Activated B cell treated with CpG ODN at 0.5 μM for 24 hours (primary cell): ENCODE measurements at regions of chr2 and their contacts with region 1.

Region 1: DNA sequence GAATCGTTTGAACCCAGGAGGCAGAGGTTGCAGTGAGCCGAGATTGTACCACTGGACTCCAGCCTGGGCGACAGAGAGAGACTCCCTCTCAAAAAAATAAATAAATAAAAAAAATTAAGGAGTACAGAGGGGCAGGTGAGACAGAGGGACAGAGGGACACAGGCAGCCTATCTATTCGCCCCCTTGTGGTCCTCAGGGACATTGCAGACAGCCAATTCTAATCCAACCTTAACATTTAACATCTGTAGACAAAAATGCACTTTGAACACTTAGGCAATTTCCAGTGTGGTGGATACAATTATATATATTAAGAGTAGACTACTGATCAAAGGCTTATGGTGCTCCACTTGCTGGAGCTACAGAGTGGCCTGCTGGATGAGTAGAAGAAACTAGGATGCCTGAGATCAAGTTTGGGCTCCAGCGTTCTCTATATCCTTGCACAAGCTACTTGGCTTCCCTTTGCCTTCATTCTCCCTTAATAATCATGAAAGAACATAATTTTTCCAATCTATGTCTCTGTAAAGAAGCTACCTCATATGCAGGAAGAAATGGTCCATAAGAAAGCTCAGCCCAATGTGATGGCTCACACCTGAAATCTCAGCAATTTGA is 8.2 kb upstream of the SMARCAL1 start:
- DNase-seq: no peak
- ATAC-seq: peak; percentile 88
- H3K4me3 Mint-ChIP-seq: no peak overlapping the region
- H3K27ac Mint-ChIP-seq: no peak overlapping the region
- H3K4me1 Mint-ChIP-seq: no peaks in the 10 kb centered on the region
- H3K27me3 Mint-ChIP-seq: peaks cover 11% of the 10 kb centered on the region
- CTCF ChIP-seq: no peak

Region 2: GRCh38 chr2:216044883-216045486 is 359.1 kb before region 1 on chr2:
- CTCF ChIA-PET with region 1: no interaction called
- POLR2A ChIA-PET with region 1: no interaction called
- intact Hi-C with region 1: no loop called
- DNase-seq: no peak
- ATAC-seq: no peak
- H3K4me3 Mint-ChIP-seq: no peak overlapping the region
- H3K27ac Mint-ChIP-seq: no peak overlapping the region
- H3K4me1 Mint-ChIP-seq: no peaks in the 10 kb centered on the region
- H3K27me3 Mint-ChIP-seq: no peaks in the 10 kb centered on the region
- CTCF ChIP-seq: no peak

Region 3: GRCh38 chr2:216108967-216109921 is 294.9 kb before region 1 on chr2 and contains the start of gene XRCC5:
- CTCF ChIA-PET with region 1: no interaction called
- POLR2A ChIA-PET with region 1: no interaction called
- intact Hi-C with region 1: loop called (anchors 1 kb)
- DNase-seq: peak; percentile 93
- ATAC-seq: peak; percentile 88
- H3K4me3 Mint-ChIP-seq: peak within 1 kb of the TSS; percentile 99
- H3K27ac Mint-ChIP-seq: peak within 1 kb of the TSS; percentile 99
- H3K4me1 Mint-ChIP-seq: peaks cover 57% of the 10 kb centered on the region
- H3K27me3 Mint-ChIP-seq: no peaks in the 10 kb centered on the region
- CTCF ChIP-seq: no peak
- total RNA-seq, gene XRCC5: 303 and 311 TPM in 2 replicates

Region 4: DNA sequence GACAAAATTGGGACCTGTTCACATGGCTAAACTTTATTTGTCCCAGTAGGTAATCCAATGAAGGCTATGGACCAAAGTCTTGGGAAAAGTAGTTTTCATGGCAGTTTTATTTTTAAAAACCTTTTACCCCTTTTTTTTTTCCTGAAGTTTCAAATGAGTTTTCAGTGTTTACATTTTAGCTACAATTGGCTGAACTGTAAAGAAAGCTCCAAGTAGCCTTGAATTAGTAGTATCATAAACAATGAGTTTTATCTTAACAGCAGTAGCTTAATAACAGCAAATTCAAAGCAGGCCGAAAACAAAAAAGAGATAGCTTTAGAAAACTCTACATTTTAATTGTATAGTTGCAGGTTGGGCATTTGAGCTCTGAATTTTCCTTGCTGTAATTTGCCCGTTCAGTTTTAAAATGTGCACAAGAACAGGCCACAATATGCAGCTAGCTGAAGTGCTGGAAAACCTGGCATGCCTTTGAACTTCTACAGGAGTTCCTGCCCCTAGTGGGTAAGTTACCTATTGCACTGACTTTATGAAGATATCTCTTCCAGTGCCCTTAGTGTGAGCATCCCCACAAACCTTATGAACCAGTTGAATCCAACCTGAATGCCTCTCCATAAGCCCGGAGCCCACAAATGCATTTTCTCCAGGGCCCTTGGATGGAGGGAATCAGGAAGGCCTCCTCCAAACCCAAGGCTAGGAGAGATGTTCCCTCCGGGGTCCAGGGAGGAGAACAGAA is 188.3 kb before region 1 on chr2:
- CTCF ChIA-PET with region 1: interaction called, 10 read pairs
- POLR2A ChIA-PET with region 1: no interaction called
- intact Hi-C with region 1: no loop called
- DNase-seq: no peak
- ATAC-seq: no peak
- H3K4me3 Mint-ChIP-seq: no peak overlapping the region
- H3K27ac Mint-ChIP-seq: no peak overlapping the region
- H3K4me1 Mint-ChIP-seq: no peaks in the 10 kb centered on the region
- H3K27me3 Mint-ChIP-seq: no peaks in the 10 kb centered on the region
- CTCF ChIP-seq: no peak

Region 5: DNA sequence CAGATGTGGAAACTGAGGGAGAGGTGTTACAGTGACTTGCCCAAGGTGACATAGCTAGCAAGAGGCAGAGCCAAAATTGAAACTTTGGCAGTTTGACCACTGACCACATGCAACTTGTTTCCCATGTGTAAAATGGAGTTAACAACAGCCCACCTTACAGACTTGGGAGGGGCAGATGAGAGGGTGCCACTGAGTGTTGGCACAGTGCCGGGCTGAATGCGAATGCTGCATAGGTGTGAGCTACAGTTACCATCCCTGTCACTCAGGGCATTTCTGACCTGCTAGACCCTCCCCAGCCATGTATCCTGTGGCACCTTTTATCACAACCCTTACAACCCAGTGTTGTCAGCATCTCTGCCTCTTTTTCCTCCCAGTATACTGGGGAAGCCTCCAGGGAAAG is 19.0 kb after region 1 on chr2:
- CTCF ChIA-PET with region 1: no interaction called
- POLR2A ChIA-PET with region 1: no interaction called
- intact Hi-C with region 1: no loop called
- DNase-seq: no peak
- ATAC-seq: no peak
- H3K4me3 Mint-ChIP-seq: no peak overlapping the region
- H3K27ac Mint-ChIP-seq: no peak overlapping the region
- H3K4me1 Mint-ChIP-seq: peaks cover 4% of the 10 kb centered on the region
- H3K27me3 Mint-ChIP-seq: no peaks in the 10 kb centered on the region
- CTCF ChIP-seq: no peak